Naive thymus-derived CD4-positive, alpha-beta T cell (primary cell): ENCODE measurements at regions of chr17 and their contacts with region 1.

Region 1: DNA sequence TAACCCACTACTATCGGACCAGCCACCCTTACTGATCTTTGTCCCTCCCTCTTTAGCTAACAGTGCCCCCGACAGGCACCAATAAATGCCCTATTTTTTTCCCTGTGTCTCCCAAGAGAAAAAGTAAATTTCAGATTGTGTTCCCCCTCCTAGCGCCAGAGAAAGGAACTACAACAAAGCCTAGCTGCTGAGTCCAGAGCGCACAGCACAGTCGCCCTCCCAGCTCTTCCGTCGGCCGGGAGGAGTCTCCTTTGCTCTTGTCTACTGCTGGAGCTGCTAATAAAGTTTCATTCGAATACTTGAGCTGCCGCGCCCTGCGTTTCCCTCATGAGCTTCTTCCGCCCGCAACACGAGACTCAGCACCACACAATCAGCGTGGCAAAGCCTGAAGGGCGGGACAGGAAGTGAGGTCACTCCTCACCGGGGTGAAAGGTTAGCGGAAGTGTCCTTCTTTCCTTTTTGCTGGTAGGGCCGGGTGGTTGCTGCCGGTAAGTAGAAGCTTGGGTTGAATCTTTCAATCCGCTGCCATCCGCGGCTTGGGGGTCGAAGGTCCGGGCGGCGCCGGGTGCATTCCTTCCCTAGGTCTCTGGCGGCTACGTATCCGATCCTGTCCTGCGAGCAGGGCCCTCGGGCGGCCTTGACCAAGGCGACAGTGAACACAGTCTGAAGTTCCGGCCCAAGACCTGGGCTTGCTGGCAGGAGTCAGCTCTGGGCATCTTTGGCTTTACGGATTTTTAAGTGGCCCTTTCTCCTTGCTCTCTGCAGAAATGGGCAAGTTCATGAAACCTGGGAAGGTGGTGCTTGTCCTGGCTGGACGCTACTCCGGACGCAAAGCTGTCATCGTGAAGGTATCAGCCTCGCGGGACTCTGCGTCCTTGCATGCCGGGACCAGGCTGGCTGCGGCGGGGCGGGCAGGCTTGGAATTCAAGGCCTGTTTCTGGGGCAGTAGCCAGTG is at the start of gene RPL27:
- DNase-seq: peak; percentile 89 to 99 (median 98)
- ATAC-seq: peak; percentile 97
- H3K4me3 ChIP-seq: peak within 1 kb of the TSS; percentile 91
- H3K4me3 Mint-ChIP-seq: peak within 1 kb of the TSS; percentile 74 to 98 (median 95)
- H3K27ac ChIP-seq: peak within 1 kb of the TSS; percentile 97
- H3K27ac Mint-ChIP-seq: peak within 1 kb of the TSS; percentile 89 to 100 (median 99)
- H3K4me1 ChIP-seq: peaks cover 15 to 18% of the 10 kb centered on the region in 2 donors
- H3K4me1 Mint-ChIP-seq: peaks cover 16 to 29% (median 24%) of the 10 kb centered on the region in 7 donors
- H3K27me3 ChIP-seq: no peaks in the 10 kb centered on the region
- H3K27me3 Mint-ChIP-seq: no peaks in the 10 kb centered on the region
- total RNA-seq, gene RPL27: 951 to 1,861 (median 1,662) TPM

Region 2: GRCh38 chr17:42720996-42721583 is 277.2 kb before region 1 on chr17:
- CTCF ChIA-PET with region 1: no interaction called
- POLR2A ChIA-PET with region 1: interaction called, 3 read pairs
- intact Hi-C with region 1: loop called in 1 of 2 experiments (anchors 1 kb)
- DNase-seq: peak in 7 of 9 donors; percentile 43 to 74 (median 62)
- ATAC-seq: peak; percentile 87
- H3K4me3 ChIP-seq: no peak overlapping the region
- H3K4me3 Mint-ChIP-seq: no peak overlapping the region
- H3K27ac ChIP-seq: no peak overlapping the region
- H3K27ac Mint-ChIP-seq: no peak overlapping the region
- H3K4me1 ChIP-seq: no peaks in the 10 kb centered on the region
- H3K4me1 Mint-ChIP-seq: peaks cover 0 to 5% (median 4%) of the 10 kb centered on the region in 7 donors
- H3K27me3 ChIP-seq: no peaks in the 10 kb centered on the region
- H3K27me3 Mint-ChIP-seq: no peaks in the 10 kb centered on the region

Region 3: GRCh38 chr17:42832974-42833766 is 165.1 kb before region 1 on chr17 and contains the start of gene PSME3:
- CTCF ChIA-PET with region 1: no interaction called
- POLR2A ChIA-PET with region 1: interaction called, 7 read pairs
- intact Hi-C with region 1: loop called (anchors 2 kb)
- DNase-seq: peak; percentile 83 to 91 (median 89)
- ATAC-seq: peak; percentile 94
- H3K4me3 ChIP-seq: peak within 1 kb of the TSS; percentile 100
- H3K4me3 Mint-ChIP-seq: peak within 1 kb of the TSS; percentile 95 to 98 (median 97)
- H3K27ac ChIP-seq: peak within 1 kb of the TSS; percentile 98
- H3K27ac Mint-ChIP-seq: peak within 1 kb of the TSS; percentile 97 to 100 (median 99)
- H3K4me1 ChIP-seq: peaks cover 10 to 16% of the 10 kb centered on the region in 2 donors
- H3K4me1 Mint-ChIP-seq: peaks cover 11 to 40% (median 33%) of the 10 kb centered on the region in 7 donors
- H3K27me3 ChIP-seq: no peaks in the 10 kb centered on the region
- H3K27me3 Mint-ChIP-seq: peaks cover 0 to 7% (median 2%) of the 10 kb centered on the region in 5 donors
- total RNA-seq, gene PSME3: 53.8 to 116 (median 65.9) TPM

Region 4: GRCh38 chr17:42937712-42938596 is 60.3 kb before region 1 on chr17:
- CTCF ChIA-PET with region 1: no interaction called
- POLR2A ChIA-PET with region 1: no interaction called
- intact Hi-C with region 1: no loop called
- DNase-seq: peak in 5 of 9 donors; percentile 2 to 23 (median 9)
- ATAC-seq: peak; percentile 48
- H3K4me3 ChIP-seq: no peak overlapping the region
- H3K4me3 Mint-ChIP-seq: no peak overlapping the region
- H3K27ac ChIP-seq: no peak overlapping the region
- H3K27ac Mint-ChIP-seq: no peak overlapping the region
- H3K4me1 ChIP-seq: no peaks in the 10 kb centered on the region
- H3K4me1 Mint-ChIP-seq: peaks cover 0 to 2% (median 0%) of the 10 kb centered on the region in 7 donors
- H3K27me3 ChIP-seq: no peaks in the 10 kb centered on the region
- H3K27me3 Mint-ChIP-seq: peaks cover 0 to 17% (median 0%) of the 10 kb centered on the region in 5 donors

Region 5: GRCh38 chr17:43011728-43012472 is 13.6 kb after region 1 on chr17:
- CTCF ChIA-PET with region 1: interaction called, 10 read pairs
- POLR2A ChIA-PET with region 1: interaction called, 31 read pairs
- intact Hi-C with region 1: no loop called
- DNase-seq: no peak
- ATAC-seq: no peak
- H3K4me3 ChIP-seq: no peak overlapping the region
- H3K4me3 Mint-ChIP-seq: no peak overlapping the region
- H3K27ac ChIP-seq: no peak overlapping the region
- H3K27ac Mint-ChIP-seq: peak overlapping the region in 2 of 9 donors; percentile 47 to 67
- H3K4me1 ChIP-seq: no peaks in the 10 kb centered on the region
- H3K4me1 Mint-ChIP-seq: peaks cover 6 to 24% (median 18%) of the 10 kb centered on the region in 7 donors
- H3K27me3 ChIP-seq: no peaks in the 10 kb centered on the region
- H3K27me3 Mint-ChIP-seq: no peaks in the 10 kb centered on the region

Region 6: DNA sequence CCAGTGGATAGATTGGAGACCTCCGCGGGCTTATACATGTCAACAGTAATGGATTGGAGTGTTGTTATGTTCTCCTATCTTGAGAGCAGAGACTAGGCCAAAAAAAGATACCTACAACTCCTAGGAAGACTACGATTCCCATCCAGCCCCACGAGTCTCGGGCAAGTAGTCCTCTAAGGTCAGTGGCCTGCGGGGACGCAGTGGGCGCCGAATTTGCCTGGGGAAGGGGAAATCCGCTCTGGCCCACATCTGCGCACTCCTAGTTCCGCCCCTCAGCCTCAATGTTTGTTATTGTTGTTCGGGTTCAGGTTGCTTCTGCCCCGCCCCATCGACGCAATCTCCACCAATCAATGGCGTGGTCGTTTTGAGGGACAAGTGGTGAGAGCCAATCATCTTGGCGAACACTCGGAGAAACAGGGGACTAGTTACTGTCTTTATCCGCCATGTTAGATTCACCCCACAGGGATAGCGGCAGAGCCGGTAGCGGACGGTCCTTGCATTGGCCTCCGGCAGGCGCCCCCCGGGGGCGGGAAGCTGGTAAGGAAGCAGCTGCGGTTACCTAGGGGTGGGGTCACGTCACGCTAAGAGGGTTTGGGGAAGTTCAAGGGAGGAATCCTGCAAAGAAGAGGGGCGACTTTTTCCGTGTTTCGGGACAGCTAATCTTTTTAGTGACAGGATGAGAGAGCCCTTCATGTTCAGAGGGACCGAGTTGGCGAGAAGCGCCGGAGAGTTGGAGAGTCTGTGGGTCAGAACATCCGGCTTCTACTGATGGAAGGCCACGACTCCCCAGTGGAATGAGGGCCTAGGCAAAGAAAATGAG is 172.7 kb after region 1 on chr17 and contains the start of gene NBR1:
- CTCF ChIA-PET with region 1: interaction called, 4 read pairs
- POLR2A ChIA-PET with region 1: interaction called, 10 read pairs
- intact Hi-C with region 1: loop called (anchors 1 kb)
- DNase-seq: peak; percentile 78 to 98 (median 97)
- ATAC-seq: peak; percentile 85
- H3K4me3 ChIP-seq: peak within 1 kb of the TSS; percentile 64
- H3K4me3 Mint-ChIP-seq: no peak within 1 kb of the TSS
- H3K27ac ChIP-seq: peak within 1 kb of the TSS; percentile 97
- H3K27ac Mint-ChIP-seq: no peak within 1 kb of the TSS
- H3K4me1 ChIP-seq: peaks cover 30 to 33% of the 10 kb centered on the region in 2 donors
- H3K4me1 Mint-ChIP-seq: peaks cover 21 to 46% (median 32%) of the 10 kb centered on the region in 7 donors
- H3K27me3 ChIP-seq: no peaks in the 10 kb centered on the region
- H3K27me3 Mint-ChIP-seq: no peaks in the 10 kb centered on the region
- total RNA-seq, gene NBR1: 44.6 to 83.0 (median 64.3) TPM

Region 7: GRCh38 chr17:43367737-43368242 is 369.5 kb after region 1 on chr17:
- CTCF ChIA-PET with region 1: no interaction called
- POLR2A ChIA-PET with region 1: interaction called, 68 read pairs
- intact Hi-C with region 1: loop called in 1 of 2 experiments (anchors 2 kb)
- DNase-seq: peak in 4 of 9 donors; percentile 31 to 80 (median 70)
- ATAC-seq: peak; percentile 72
- H3K4me3 ChIP-seq: peak overlapping the region; percentile 75
- H3K4me3 Mint-ChIP-seq: peak overlapping the region; percentile 85 to 99 (median 92)
- H3K27ac ChIP-seq: peak overlapping the region; percentile 93
- H3K27ac Mint-ChIP-seq: peak overlapping the region; percentile 99 to 100 (median 100)
- H3K4me1 ChIP-seq: peaks cover 8 to 19% of the 10 kb centered on the region in 2 donors
- H3K4me1 Mint-ChIP-seq: peaks cover 31 to 65% (median 59%) of the 10 kb centered on the region in 7 donors
- H3K27me3 ChIP-seq: no peaks in the 10 kb centered on the region
- H3K27me3 Mint-ChIP-seq: no peaks in the 10 kb centered on the region